ENCODE measurements at regions of chr19 and their contacts with region 1.

Region 1: GRCh38 chr19:10986261-10987127 is 25.7 kb downstream of the SMARCA4 start:
- DNase-seq: no peak
- H3K4me3 ChIP-seq: no peak overlapping the region
- H3K27ac ChIP-seq: no peak overlapping the region
- H3K4me1 ChIP-seq: no peaks in the 10 kb centered on the region
- H3K27me3 ChIP-seq: no peaks in the 10 kb centered on the region
- CTCF ChIP-seq: no peak

Region 2: GRCh38 chr19:11064831-11065303 is 78.4 kb after region 1 on chr19:
- CTCF ChIA-PET with region 1: no interaction called
- dilution Hi-C with region 1: loop called (anchors 5 kb)
- in situ Hi-C with region 1: no loop called
- intact Hi-C with region 1: no loop called
- DNase-seq: no peak
- H3K4me3 ChIP-seq: no peak overlapping the region
- H3K27ac ChIP-seq: no peak overlapping the region
- H3K4me1 ChIP-seq: no peaks in the 10 kb centered on the region
- H3K27me3 ChIP-seq: no peaks in the 10 kb centered on the region
- CTCF ChIP-seq: no peak

Measured in mammary epithelial cell (primary cell).